Gastrocnemius medialis (tissue), 4 donors: ENCODE measurements at regions of chr20 and their contacts with region 1.

Region 1: DNA sequence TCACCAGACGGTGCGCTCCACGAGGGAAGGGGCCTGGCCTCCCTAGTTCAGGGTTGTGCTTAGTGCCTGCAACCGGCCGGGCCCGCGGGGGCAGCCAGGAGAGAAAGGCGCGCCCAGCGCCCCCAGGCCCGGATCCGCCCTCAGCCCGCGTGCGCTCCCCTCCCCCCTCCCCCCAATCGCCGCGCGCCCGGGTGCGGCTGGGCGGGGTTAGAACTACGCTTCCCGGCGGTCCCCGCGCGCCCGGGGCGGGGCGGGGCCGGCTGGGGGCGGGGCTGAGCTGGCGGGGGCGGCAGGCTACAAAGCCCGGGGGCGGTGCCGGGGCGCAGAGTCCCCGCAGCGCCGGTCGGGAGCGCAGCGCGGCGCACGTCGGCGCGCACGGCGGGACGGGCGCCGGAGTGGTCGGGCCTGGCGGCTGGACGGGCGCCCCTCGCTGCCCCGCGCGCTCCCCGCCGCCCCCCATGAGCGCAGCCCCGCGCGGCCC is at the start of gene RBM38:
- DNase-seq: peak in 1 of 2 donors; percentile 71
- ATAC-seq: peak; percentile 28 to 38
- H3K4me3 ChIP-seq: peak within 1 kb of the TSS; percentile 58 to 82 (median 74)
- H3K27ac ChIP-seq: peak within 1 kb of the TSS; percentile 96 to 99 (median 98)
- H3K4me1 ChIP-seq: peaks cover 53 to 55% of the 10 kb centered on the region in 2 donors
- H3K27me3 ChIP-seq: no peaks in the 10 kb centered on the region
- CTCF ChIP-seq: no peak
- POLR2A ChIP-seq: peak; percentile 46 to 71
- total RNA-seq, gene RBM38: 56.7 to 229 (median 177) TPM

Region 2: GRCh38 chr20:57473246-57474048 is 82.3 kb after region 1 on chr20:
- in situ Hi-C with region 1: no loop called
- intact Hi-C with region 1: loop called (anchors 2 kb)
- DNase-seq: no peak
- ATAC-seq: no peak
- H3K4me3 ChIP-seq: no peak overlapping the region
- H3K27ac ChIP-seq: peak overlapping the region in 2 of 4 donors; percentile 14 to 34
- H3K4me1 ChIP-seq: peaks cover 34 to 56% of the 10 kb centered on the region in 2 donors
- H3K27me3 ChIP-seq: peaks cover 0 to 2% (median 0%) of the 10 kb centered on the region in 3 donors
- CTCF ChIP-seq: peak in 1 of 5 experiments; percentile 28
- POLR2A ChIP-seq: no peak

Region 3: GRCh38 chr20:57498425-57499400 is 107.6 kb after region 1 on chr20:
- in situ Hi-C with region 1: loop called in 3 of 4 experiments (anchors 5 kb)
- intact Hi-C with region 1: no loop called
- DNase-seq: no peak
- ATAC-seq: no peak
- H3K4me3 ChIP-seq: no peak overlapping the region
- H3K27ac ChIP-seq: no peak overlapping the region
- H3K4me1 ChIP-seq: peaks cover 9 to 10% of the 10 kb centered on the region in 2 donors
- H3K27me3 ChIP-seq: no peaks in the 10 kb centered on the region
- CTCF ChIP-seq: no peak
- POLR2A ChIP-seq: no peak

Region 4: GRCh38 chr20:57709931-57710799 is 319.1 kb after region 1 on chr20 and contains the start of gene PMEPA1:
- in situ Hi-C with region 1: loop called in 1 of 4 experiments (anchors 25 kb)
- intact Hi-C with region 1: loop called (anchors 1 kb)
- DNase-seq: peak; percentile 92 to 94
- ATAC-seq: peak; percentile 74 to 78
- H3K4me3 ChIP-seq: peak within 1 kb of the TSS; percentile 62 to 84 (median 73)
- H3K27ac ChIP-seq: peak within 1 kb of the TSS; percentile 83 to 94 (median 91)
- H3K4me1 ChIP-seq: peaks cover 53% of the 10 kb centered on the region in 2 donors
- H3K27me3 ChIP-seq: no peaks in the 10 kb centered on the region
- CTCF ChIP-seq: peak in 2 of 5 experiments; percentile 7 to 36
- POLR2A ChIP-seq: peak; percentile 85 to 94
- total RNA-seq, gene PMEPA1: 1.5 to 8.1 (median 5.8) TPM

Region 5: DNA sequence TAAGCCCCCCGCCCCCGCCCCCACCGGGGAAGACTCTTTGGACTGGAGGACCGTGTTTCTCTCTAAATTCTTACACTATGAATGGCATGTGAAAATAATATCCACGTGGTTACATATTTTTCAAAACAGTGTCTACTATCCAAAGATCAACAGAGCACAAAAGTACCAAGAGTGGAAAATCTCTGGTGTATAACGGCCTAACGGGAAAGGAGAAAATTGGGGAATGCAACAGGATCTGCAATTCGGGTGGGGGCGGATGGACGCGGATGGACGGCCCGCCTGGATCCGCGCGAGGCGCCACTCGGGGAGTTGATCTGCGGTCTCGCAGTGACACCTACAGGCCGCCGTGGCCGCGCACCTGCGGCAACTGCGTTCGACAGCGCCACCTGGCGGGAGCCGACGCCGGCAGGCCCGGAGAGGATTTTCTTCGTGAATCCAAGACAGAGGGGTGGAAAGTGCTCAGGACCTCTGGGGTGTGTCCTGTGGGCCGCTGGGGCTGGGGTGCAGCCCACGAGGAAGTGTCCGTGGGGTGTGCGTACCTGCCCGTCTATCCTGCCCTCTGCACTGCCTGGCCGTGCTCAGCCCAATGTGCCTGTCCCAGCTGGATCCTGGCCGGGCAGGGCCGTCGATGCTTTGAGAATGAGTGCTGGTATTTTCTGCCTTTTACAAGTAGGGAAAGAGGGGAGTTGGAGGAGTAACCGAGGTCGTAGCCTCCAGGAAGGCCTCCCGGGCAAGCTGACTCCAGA is 818.7 kb after region 1 on chr20:
- in situ Hi-C with region 1: loop called in 2 of 4 experiments (anchors 25 kb)
- intact Hi-C with region 1: no loop called
- DNase-seq: peak; percentile 46 to 58
- ATAC-seq: peak; percentile 47 to 80
- H3K4me3 ChIP-seq: no peak overlapping the region
- H3K27ac ChIP-seq: no peak overlapping the region
- H3K4me1 ChIP-seq: no peaks in the 10 kb centered on the region
- H3K27me3 ChIP-seq: peaks cover 0 to 7% (median 3%) of the 10 kb centered on the region in 3 donors
- CTCF ChIP-seq: peak; percentile 99 to 100 (median 100)
- POLR2A ChIP-seq: no peak